ENCODE measurements at regions of chr3 and their contacts with region 1.

Region 1: DNA sequence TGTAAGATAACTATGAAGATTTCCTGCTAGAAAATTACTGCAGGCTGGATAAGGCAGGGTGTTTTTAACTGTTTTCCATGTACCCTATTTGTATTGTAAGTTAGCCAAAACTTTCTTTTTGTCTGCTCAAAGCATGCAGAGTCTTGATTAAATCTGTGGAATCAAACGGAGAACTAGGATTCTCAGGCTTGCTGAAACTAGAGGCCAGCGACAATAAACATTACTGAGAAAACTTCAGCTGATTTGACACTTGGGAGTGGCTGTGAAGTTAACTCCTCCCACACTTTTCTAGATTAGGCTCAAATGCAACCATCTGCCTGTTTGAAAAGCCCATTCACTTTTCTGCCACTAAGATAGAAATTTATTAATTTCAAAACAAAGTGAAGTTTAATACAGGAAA is 153.2 kb upstream of the FRMD4B start:
- DNase-seq: no peak
- ATAC-seq: no peak

Region 2: GRCh38 chr3:69439643-69440270 is 99.4 kb before region 1 on chr3:
- intact Hi-C with region 1: loop called in 1 of 2 experiments (anchors 5 kb)
- DNase-seq: no peak
- ATAC-seq: peak; percentile 30 to 55

Region 3: DNA sequence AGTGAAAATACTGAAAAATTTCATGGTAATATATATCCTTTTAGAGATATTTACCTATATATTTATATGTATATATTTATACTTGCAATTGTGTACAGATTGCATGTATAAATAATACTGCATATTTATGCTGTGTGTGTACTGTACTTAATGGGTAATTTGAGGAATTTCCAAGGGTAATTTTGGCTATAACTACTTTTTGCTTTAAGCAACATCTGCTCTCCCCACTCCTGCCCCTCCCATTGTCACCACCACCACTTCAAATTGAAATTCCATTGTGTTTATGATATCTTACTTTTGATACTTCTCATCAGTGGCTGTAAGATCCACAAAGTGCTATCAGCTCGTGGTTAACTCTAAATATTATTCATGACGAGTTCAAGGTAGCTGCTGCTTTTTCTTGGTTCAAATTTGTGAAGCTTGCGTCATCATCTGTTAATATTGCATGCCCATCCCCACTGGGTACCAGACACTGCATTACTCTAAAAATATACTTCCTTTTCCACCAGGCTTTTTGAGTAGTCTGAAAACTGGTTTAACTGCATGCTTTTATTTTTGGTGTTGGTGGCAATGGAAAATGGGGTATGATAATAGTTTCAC is 108.5 kb after region 1 on chr3:
- intact Hi-C with region 1: no loop called
- DNase-seq: no peak
- ATAC-seq: peak in 1 of 2 donors; percentile 33

Region 4: DNA sequence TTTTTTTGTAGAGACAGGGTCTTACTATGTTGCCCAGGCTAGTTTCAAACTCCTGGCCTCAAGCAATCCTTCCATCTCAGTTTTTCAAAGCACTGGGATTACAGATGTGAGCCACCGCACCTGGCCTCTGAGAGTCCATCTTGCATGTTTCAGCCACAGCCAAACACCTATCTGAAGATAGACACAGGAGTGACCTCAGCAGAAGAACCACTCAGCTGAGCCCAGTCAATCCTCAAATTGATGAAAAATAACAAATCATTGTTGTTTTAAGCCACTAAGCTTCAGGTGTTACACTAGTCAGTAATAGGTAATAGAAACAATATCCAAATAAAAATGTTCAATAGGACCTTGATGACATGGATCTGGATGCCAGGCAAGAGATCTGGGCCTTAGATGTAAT is 161.8 kb after region 1 on chr3:
- intact Hi-C with region 1: no loop called
- DNase-seq: no peak
- ATAC-seq: no peak